GM10248 (cell line): ENCODE measurements at regions of chrX and their contacts with region 1.

Region 1: GRCh38 chrX:47384502-47384901 is 14.1 kb downstream of the ZNF157 start:
- DNase-seq: peak; percentile 46
- CTCF ChIP-seq: peak; percentile 62

Region 2: DNA sequence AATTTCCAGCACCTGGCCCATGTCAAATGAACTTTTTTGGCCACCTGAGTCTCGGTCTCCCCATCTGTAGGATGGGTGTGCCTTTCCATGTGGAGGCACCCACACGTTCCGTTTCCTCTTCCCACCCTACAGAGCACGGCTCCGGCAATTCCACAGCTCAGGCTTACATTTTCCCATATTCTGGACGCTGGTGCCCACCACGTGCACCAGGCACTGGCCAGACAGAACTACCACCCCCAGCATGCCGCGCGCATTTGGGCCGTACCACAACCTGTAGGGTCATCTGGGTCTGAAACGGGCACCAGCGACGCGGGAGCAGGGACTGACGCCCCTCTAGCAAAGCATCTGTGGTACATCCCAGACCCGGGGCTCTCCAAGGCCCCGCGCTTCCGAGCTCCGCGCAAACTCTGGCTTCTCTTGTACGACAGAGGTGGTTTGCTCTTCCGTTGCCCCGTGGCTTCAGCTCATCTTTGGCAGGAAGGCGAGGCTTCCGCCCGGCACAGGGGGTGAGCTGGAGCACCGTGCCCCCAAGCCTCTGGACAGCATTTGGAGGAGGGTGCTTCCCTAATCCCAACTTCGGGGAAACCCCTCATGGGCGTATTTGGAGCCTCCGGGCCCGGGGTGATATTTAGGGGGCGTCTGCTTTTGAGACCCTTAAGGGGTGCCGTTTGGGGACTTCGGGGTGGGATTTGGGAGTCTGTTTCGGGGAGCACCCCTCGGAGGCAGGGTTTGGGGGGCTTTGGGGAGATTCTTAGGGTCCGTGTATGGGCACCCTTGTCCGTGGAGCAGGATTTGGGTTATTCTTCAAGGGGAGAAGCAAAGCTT is 193.8 kb before region 1 on chrX:
- CTCF ChIA-PET with region 1: interaction called, 13 read pairs
- POLR2A ChIA-PET with region 1: no interaction called
- DNase-seq: peak; percentile 88
- CTCF ChIP-seq: no peak

Region 3: DNA sequence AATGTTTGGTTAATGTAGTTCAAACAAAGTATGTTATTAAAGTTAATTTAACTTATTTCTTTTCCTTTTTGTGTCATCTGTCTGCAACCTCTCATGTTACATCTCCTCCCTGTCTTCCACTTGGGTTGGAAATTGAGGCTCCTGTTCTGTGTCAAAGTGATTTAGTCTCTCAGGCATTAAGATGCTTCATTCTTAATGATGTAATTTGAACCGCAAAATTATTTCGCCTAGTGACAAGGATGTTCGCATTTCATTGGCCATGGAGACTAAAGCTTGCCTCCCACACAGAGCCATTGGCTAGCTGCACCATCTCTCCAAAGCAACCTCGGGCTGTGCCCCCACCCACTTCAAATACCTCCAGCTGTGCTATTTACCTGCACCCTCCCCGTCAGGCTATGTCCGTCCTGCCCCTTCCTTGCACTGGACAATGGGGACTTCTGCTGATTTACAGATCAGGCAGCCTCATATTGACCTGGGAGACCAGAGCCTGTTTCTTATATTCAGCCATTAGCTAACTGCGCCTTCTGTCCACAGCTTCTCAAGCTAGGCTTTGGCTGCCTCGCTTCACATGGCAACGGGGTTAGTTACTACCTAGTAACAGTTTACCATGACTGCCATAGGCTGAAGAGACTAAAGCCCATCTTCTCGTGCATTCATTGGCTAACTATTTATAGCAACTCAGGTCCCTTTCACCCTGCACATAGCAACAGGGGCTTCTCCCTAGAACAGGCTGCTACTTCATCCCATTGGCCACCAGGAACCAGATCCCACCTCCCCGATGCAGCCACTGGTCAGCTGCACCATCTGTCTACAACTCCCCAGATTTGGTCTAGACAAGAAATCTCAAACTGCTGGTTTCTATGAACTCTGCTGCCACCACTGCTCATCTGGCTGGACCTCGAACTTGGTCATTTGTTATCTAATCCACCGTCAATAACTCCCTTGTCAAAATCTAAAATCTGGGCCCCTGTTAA is 22.7 kb before region 1 on chrX:
- CTCF ChIA-PET with region 1: interaction called, 20 read pairs
- POLR2A ChIA-PET with region 1: interaction called, 4 read pairs
- DNase-seq: peak; percentile 85
- CTCF ChIP-seq: peak; percentile 13

Region 4: DNA sequence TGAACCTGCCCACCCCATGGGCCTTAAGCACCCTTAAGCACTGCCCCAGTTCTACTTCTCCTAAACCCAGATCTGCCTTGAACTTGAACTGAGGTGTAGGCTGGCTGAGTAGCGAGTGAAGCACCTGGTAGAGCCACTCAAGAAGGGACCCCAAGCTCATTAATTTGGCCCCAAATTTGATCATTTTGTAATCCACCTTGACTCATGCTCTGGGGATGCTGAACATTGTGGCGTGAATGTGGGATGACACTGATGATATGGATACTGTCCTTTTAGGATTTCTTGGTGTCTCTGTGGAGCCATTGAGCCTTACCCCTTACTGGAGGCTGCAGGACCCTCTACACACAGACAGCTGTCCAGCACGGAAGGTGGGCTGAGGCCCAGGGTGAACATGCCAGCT is 14.2 kb before region 1 on chrX and contains the start of gene ZNF157:
- CTCF ChIA-PET with region 1: interaction called, 20 read pairs
- POLR2A ChIA-PET with region 1: no interaction called
- DNase-seq: no peak
- CTCF ChIP-seq: no peak

Region 5: GRCh38 chrX:47523297-47523696 is 138.8 kb after region 1 on chrX:
- CTCF ChIA-PET with region 1: interaction called, 14 read pairs
- POLR2A ChIA-PET with region 1: no interaction called
- DNase-seq: peak; percentile 86
- CTCF ChIP-seq: peak; percentile 82